Sciatic nerve (tissue), 2 donors: ENCODE measurements at regions of chr16 and their contacts with region 1.

Region 1: DNA sequence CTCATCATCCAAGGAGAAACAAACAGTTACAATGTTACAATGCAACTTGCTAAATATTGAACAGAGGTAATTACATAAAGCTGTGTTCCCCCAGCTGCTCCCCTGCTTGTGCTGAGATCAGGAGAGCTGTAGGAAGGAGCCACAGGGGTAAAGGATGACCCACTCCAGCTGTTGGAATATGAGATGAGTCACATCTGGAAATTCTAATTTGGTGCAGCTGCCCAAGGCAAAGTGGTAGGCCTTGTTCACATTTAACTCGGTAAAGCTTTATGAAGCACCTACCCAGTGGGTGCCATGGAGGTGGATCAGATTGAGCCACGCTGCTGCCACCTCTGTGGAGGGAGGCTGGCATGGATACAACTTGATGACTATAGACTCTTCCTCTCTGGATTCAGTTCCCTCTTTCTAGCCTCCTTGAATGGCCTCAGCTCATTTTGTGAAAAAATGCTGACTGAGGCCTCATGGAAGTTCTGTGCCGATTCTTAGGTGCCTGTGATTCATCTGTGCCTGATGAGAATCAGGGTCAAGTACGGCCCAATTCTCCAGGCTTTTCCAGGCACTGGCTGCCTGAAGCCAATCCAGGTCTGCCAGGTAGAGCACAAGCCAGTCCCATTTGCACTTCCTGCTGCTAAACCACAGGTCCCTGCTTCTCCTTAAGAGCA is 7.4 kb downstream of the ZNF689 start:
- DNase-seq: no peak
- ATAC-seq: peak; percentile 45

Region 2: DNA sequence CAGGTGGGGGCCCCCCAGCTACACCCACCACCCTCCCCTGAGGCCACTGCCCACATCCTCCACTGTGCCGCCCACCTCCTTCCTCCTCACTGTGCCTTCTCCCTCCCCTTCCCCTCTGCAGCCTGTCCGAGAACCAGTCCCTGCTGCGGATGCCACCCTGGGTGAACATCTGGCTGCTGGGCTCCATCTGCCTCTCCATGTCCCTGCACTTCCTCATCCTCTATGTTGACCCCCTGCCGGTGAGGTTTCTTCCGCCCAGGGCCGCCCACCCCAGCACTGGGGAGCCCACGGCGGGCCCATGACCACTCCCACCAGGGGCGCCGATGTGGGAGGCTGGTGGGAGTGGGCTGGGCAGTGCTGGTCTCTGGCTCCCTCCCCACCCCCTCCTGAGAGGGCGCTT is 1699.8 kb before region 1 on chr16:
- intact Hi-C with region 1: no loop called
- DNase-seq: no peak
- ATAC-seq: peak; percentile 13

Region 3: DNA sequence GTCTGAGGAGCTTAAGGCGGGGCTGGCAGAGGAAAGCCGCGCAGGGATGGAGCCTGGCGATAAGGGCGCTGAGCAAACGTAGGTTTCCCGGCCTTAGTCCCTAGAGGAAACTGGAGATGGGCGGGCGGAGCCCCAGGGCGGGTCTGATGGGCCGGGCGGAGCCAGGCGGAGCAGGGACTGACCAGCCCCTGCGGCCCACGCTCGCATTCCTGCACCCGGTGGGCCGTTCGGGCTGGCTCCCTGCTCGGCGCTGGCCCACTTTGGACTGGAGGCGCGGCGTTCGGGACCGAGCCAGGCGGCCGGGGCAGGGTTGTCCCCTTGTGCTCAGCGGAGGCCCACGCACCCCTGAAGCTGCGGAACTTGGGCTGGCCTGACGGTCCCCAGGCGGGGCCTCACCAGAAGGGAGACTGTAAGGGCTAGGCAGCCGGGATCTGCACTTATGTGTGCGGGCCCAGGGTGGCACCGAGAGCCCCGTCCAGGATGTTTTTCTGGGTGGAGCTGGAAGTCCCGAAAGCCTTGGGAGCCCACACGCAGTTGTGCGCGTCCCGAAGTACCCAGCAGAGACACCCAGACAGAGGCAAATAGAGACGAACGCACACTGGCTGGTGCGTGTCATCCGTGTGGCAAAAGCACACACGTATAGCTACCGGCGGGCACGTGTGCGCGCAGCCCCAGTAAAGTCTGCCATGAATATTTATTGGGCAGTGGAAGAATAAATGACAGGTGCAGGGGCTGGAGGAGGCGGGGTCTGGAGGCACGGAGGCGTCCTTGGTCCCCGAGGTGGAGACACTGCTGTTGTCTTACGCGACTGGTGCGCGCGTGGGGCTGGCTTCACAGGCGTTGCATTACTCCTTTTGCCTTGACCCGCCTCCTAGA is 612.8 kb after region 1 on chr16:
- intact Hi-C with region 1: loop called (anchors 5 kb)
- DNase-seq: peak; percentile 70
- ATAC-seq: peak; percentile 83